ENCODE measurements at regions of chr11 and their contacts with region 1.

Region 1: GRCh38 chr11:66117737-66118136 is 47.7 kb downstream of the PACS1 start:
- DNase-seq: peak in 1 of 5 donors; percentile 22
- H3K4me3 ChIP-seq: peak overlapping the region; percentile 16
- H3K4me3 Mint-ChIP-seq: peak overlapping the region; percentile 51 to 79 (median 71)
- H3K27ac ChIP-seq: no peak overlapping the region
- H3K27ac Mint-ChIP-seq: peak overlapping the region; percentile 63 to 96 (median 89)
- H3K4me1 ChIP-seq: peaks cover 91% of the 10 kb centered on the region
- H3K4me1 Mint-ChIP-seq: peaks cover 88 to 100% (median 100%) of the 10 kb centered on the region in 3 donors
- H3K27me3 ChIP-seq: no peaks in the 10 kb centered on the region
- H3K27me3 Mint-ChIP-seq: no peaks in the 10 kb centered on the region

Region 2: GRCh38 chr11:65945430-65945911 is 172.3 kb before region 1 on chr11 and contains the start of gene TSGA10IP:
- CTCF ChIA-PET with region 1: no interaction called
- POLR2A ChIA-PET with region 1: no interaction called
- DNase-seq: no peak
- H3K4me3 ChIP-seq: no peak within 1 kb of the TSS
- H3K4me3 Mint-ChIP-seq: no peak within 1 kb of the TSS
- H3K27ac ChIP-seq: no peak within 1 kb of the TSS
- H3K27ac Mint-ChIP-seq: no peak within 1 kb of the TSS
- H3K4me1 ChIP-seq: no peaks in the 10 kb centered on the region
- H3K4me1 Mint-ChIP-seq: no peaks in the 10 kb centered on the region
- H3K27me3 ChIP-seq: no peaks in the 10 kb centered on the region
- H3K27me3 Mint-ChIP-seq: no peaks in the 10 kb centered on the region
- total RNA-seq, gene TSGA10IP: not detected

Region 3: DNA sequence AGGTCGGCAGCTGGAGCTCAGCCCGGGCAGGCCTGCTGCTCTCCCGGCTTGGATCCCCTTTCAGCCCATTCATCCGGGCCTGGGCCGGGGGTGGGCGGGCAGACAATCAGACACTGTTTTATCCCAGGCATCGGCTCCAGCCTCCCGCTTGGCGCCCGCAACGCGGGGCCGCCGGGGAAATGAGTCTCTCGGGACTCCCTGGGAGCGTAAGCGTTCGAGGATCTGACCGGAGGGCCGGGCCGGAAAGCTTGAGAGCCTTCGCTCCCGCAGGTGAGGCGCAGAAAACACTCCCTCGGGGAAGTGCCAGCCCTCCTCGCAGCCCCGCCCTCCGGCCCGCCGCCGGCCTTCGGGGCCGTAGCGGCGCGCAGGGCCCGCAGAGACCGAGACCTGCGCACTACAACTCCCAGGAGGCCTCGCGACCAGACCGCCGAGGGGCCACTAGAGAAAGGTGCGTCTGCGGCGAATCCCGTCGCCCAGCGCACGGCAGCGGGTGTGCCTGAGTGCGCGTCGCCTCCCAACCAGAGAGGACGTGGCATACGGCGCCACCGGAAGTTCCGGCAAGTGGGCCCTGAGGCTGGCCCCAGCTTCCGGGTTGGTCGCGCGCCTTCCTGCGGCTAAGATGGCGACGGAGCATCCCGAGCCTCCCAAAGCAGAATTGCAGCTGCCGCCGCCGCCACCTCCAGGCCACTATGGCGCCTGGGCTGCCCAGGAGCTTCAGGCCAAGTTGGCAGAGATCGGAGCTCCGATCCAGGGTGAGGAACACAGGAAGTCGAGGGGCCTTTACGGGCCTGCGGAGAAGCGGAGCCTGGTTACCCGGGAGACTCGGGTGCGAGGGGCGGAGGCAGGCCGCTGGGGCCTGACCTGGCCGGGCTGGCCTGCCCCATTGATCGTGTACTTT is 65.7 kb before region 1 on chr11 and contains the start of gene SF3B2:
- CTCF ChIA-PET with region 1: no interaction called
- POLR2A ChIA-PET with region 1: interaction called, 11 read pairs
- DNase-seq: peak; percentile 93 to 97 (median 95)
- H3K4me3 ChIP-seq: peak within 1 kb of the TSS; percentile 79
- H3K4me3 Mint-ChIP-seq: peak within 1 kb of the TSS; percentile 98 to 100 (median 99)
- H3K27ac ChIP-seq: peak within 1 kb of the TSS; percentile 86
- H3K27ac Mint-ChIP-seq: peak within 1 kb of the TSS; percentile 96 to 99 (median 99)
- H3K4me1 ChIP-seq: peaks cover 23% of the 10 kb centered on the region
- H3K4me1 Mint-ChIP-seq: peaks cover 27 to 38% (median 34%) of the 10 kb centered on the region in 3 donors
- H3K27me3 ChIP-seq: no peaks in the 10 kb centered on the region
- H3K27me3 Mint-ChIP-seq: peaks cover 4 to 6% of the 10 kb centered on the region in 2 donors
- total RNA-seq, gene SF3B2: 261 to 274 TPM

Region 4: GRCh38 chr11:66142370-66143263 is 24.9 kb after region 1 on chr11:
- CTCF ChIA-PET with region 1: no interaction called
- POLR2A ChIA-PET with region 1: no interaction called
- DNase-seq: no peak
- H3K4me3 ChIP-seq: no peak overlapping the region
- H3K4me3 Mint-ChIP-seq: no peak overlapping the region
- H3K27ac ChIP-seq: no peak overlapping the region
- H3K27ac Mint-ChIP-seq: peak overlapping the region in 2 of 8 donors; percentile 14 to 55
- H3K4me1 ChIP-seq: peaks cover 10% of the 10 kb centered on the region
- H3K4me1 Mint-ChIP-seq: peaks cover 36 to 69% (median 63%) of the 10 kb centered on the region in 3 donors
- H3K27me3 ChIP-seq: no peaks in the 10 kb centered on the region
- H3K27me3 Mint-ChIP-seq: no peaks in the 10 kb centered on the region

Measured in CD8-positive, alpha-beta memory T cell (primary cell).